MCF 10A (cell line): ENCODE measurements at regions of chr16 and their contacts with region 1.

Region 1: DNA sequence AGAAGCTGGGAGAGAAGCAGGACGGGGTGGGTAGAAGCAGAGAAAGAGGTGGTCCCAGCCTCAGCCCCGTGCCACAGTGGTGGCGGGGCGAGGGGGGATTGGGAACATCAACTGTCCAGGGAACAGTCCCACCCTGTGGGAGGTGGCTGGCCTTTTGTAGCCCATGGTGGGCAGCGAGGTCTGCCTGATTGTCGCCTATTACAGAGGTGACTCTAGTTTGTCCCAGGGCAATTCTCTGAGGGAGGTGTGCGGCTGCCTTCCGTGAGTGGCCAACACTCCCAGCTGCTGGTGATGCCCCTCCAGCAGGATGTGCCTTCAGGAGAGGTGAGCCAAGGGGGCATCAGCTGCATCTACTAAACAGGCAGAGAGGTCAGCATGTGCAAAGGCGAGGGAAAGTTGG is 5.0 kb upstream of the BRD7 start:
- DNase-seq: no peak
- H3K4me3 Mint-ChIP-seq: no peak overlapping the region
- H3K27ac Mint-ChIP-seq: no peak overlapping the region
- H3K4me1 Mint-ChIP-seq: peaks cover 7% of the 10 kb centered on the region
- H3K27me3 Mint-ChIP-seq: no peaks in the 10 kb centered on the region
- CTCF ChIP-seq: no peak

Region 2: GRCh38 chr16:50081428-50082018 is 292.3 kb before region 1 on chr16:
- CTCF ChIA-PET with region 1: no interaction called
- POLR2A ChIA-PET with region 1: no interaction called
- intact Hi-C with region 1: no loop called
- DNase-seq: no peak
- H3K4me3 Mint-ChIP-seq: no peak overlapping the region
- H3K27ac Mint-ChIP-seq: peak overlapping the region; percentile 49
- H3K4me1 Mint-ChIP-seq: no peaks in the 10 kb centered on the region
- H3K27me3 Mint-ChIP-seq: no peaks in the 10 kb centered on the region
- CTCF ChIP-seq: no peak

Region 3: DNA sequence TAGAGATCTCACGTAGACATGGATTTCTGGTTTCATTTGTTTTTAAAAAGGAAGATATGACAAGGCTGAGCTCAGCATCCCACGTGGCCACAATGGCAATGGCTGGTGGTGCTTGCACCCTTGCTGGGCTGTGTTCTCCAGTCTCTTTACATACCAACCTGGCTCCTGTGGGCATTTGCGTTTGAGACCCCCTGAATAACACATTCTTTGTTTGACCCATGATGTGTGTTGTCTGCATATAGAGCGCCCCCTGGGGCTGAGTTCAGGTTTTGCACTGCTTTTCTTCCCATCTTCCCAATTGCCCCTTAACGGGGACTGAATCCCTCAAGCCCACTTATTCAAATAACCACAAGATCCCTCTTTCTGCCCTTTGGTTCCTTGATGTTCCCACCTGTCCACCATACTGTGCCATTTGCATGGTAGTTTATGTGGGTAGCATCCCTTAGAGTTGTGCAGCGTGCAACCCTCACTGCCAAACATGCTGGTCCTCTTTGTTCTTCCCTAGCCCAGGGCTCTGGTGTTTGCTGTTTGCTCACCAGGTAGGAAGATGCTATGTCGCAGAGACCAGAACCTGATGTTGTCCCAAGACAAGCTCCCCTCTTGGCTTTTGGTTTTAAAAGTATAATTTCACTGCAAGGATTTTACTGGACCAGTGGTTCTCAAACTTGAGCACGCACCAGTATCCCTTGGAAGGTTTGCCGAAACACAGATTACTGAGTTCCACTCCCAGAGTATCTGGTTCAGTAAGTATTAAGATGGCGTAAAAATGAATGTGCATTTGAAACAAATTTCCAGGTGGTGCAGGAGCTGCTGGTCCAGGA is 136.0 kb after region 1 on chr16:
- CTCF ChIA-PET with region 1: interaction called, 3 read pairs
- POLR2A ChIA-PET with region 1: no interaction called
- intact Hi-C with region 1: loop called (anchors 1 kb)
- DNase-seq: peak; percentile 51
- H3K4me3 Mint-ChIP-seq: no peak overlapping the region
- H3K27ac Mint-ChIP-seq: no peak overlapping the region
- H3K4me1 Mint-ChIP-seq: no peaks in the 10 kb centered on the region
- H3K27me3 Mint-ChIP-seq: no peaks in the 10 kb centered on the region
- CTCF ChIP-seq: peak; percentile 74

Region 4: GRCh38 chr16:50644729-50645128 is 270.9 kb after region 1 on chr16:
- CTCF ChIA-PET with region 1: interaction called, 17 read pairs
- POLR2A ChIA-PET with region 1: interaction called, 3 read pairs
- intact Hi-C with region 1: no loop called
- DNase-seq: peak; percentile 28
- H3K4me3 Mint-ChIP-seq: no peak overlapping the region
- H3K27ac Mint-ChIP-seq: no peak overlapping the region
- H3K4me1 Mint-ChIP-seq: no peaks in the 10 kb centered on the region
- H3K27me3 Mint-ChIP-seq: peaks cover 10% of the 10 kb centered on the region
- CTCF ChIP-seq: peak; percentile 20